Esophagus muscularis mucosa (tissue), 4 donors: ENCODE measurements at regions of chr1 and their contacts with region 1.

Region 1: DNA sequence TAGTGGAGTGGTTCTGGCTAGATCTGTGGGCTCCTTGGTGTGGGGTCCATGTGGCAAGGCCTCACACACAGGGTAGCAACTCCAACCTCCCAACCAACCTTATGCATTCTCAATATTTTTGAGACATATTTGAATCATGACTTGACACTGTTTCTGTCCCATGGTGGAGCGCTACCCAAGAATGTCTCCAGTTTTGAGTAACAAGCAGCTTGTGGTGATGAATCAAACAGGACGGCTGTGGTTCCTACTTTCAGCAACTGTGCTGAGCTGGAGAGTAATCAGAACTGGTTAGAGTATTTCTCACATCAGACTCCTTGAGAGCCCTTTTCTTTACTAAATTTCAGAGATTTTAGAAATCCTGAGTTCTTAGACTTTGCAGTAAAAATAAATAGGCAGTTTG is 3.1 kb downstream of the LCE3D start:
- DNase-seq: no peak
- H3K4me3 ChIP-seq: no peak overlapping the region
- H3K27ac ChIP-seq: no peak overlapping the region
- H3K4me1 ChIP-seq: no peaks in the 10 kb centered on the region
- H3K27me3 ChIP-seq: peaks cover 0 to 20% (median 0%) of the 10 kb centered on the region in 4 donors
- CTCF ChIP-seq: no peak
- EP300 ChIP-seq: no peak
- POLR2A ChIP-seq: no peak

Region 2: DNA sequence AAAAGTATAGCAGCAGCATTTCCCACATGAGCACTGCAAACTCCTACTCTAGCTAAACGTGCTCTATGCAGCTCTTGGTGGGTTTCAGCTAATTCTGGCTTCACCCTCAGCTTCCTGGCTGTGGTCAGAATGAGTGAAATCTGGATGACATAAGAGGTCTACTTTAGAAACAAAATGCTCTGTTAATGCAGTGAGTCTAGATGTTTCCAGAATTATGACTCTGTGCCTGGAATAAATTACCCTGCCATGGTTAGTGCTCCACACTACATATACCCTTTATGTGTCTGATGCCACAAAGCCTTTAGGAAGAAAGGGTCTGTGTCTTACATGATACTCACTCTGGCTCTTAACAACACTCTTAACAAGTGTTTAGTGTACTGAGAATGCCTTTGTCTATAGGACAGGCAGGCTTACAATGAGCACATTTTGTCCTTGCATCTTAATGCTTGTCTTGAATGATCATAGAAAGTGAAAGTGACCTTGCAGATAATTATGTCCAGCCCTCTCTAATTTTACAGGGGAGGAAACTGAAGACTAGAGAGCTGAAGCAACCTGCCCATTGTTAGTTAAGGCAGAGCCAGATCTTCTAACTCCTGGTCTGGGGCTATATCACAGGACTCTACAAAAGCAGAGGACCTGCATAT is 592.7 kb before region 1 on chr1:
- intact Hi-C with region 1: no loop called
- DNase-seq: no peak
- H3K4me3 ChIP-seq: no peak overlapping the region
- H3K27ac ChIP-seq: peak overlapping the region in 1 of 4 donors; percentile 0
- H3K4me1 ChIP-seq: peaks cover 62 to 86% (median 79%) of the 10 kb centered on the region in 4 donors
- H3K27me3 ChIP-seq: no peaks in the 10 kb centered on the region
- CTCF ChIP-seq: no peak
- EP300 ChIP-seq: no peak
- POLR2A ChIP-seq: no peak

Region 3: GRCh38 chr1:152515434-152515783 is 61.8 kb before region 1 on chr1:
- intact Hi-C with region 1: loop called (anchors 10 kb)
- DNase-seq: peak; percentile 89
- H3K4me3 ChIP-seq: peak overlapping the region; percentile 35 to 46 (median 36)
- H3K27ac ChIP-seq: no peak overlapping the region
- H3K4me1 ChIP-seq: peaks cover 7 to 11% (median 10%) of the 10 kb centered on the region in 4 donors
- H3K27me3 ChIP-seq: peaks cover 0 to 71% (median 18%) of the 10 kb centered on the region in 4 donors
- CTCF ChIP-seq: no peak
- EP300 ChIP-seq: no peak
- POLR2A ChIP-seq: no peak

Region 4: GRCh38 chr1:152836870-152837269 is 259.7 kb after region 1 on chr1:
- intact Hi-C with region 1: no loop called
- DNase-seq: no peak
- H3K4me3 ChIP-seq: no peak overlapping the region
- H3K27ac ChIP-seq: no peak overlapping the region
- H3K4me1 ChIP-seq: no peaks in the 10 kb centered on the region
- H3K27me3 ChIP-seq: no peaks in the 10 kb centered on the region
- CTCF ChIP-seq: no peak
- EP300 ChIP-seq: no peak
- POLR2A ChIP-seq: no peak